H1 (cell line): ENCODE measurements at regions of chr17 and their contacts with region 1.

Region 1: DNA sequence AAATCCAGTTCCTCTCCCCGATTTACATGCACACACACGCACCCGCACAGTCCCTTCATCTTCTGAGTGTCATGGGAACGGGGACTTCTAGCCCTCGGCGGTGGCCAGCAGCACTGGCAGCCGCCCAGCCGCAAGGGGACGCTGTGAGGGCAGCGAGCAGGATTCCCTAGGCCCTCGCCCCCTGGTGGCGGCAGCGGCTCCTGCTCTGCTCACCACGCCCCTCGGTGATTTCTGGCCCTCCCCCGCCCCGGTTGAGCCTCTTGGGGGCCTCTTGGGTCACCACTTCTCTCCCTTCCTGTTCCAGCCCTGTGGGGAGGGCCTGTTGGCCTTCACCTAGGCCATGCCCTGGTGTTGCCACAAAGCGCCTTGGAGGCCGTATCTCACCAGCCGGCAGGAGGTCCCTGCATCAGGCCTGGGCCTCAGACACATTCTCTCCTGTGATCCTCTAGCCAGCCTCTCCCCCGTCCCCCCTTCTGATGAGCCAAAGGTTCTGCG is 75.2 kb upstream of the KSR1 start:
- DNase-seq: peak; percentile 68 to 97
- H3K4me3 ChIP-seq: no peak overlapping the region
- H3K27ac ChIP-seq: no peak overlapping the region
- H3K4me1 ChIP-seq: no peaks in the 10 kb centered on the region
- H3K27me3 ChIP-seq: no peaks in the 10 kb centered on the region
- CTCF ChIP-seq: peak; percentile 100
- EP300 ChIP-seq: peak in 1 of 2 experiments; percentile 46; a peak in 1 of 3 replicates
- POLR2A ChIP-seq: no peak
- RAD21 ChIP-seq: peak; percentile 78 to 82

Region 2: DNA sequence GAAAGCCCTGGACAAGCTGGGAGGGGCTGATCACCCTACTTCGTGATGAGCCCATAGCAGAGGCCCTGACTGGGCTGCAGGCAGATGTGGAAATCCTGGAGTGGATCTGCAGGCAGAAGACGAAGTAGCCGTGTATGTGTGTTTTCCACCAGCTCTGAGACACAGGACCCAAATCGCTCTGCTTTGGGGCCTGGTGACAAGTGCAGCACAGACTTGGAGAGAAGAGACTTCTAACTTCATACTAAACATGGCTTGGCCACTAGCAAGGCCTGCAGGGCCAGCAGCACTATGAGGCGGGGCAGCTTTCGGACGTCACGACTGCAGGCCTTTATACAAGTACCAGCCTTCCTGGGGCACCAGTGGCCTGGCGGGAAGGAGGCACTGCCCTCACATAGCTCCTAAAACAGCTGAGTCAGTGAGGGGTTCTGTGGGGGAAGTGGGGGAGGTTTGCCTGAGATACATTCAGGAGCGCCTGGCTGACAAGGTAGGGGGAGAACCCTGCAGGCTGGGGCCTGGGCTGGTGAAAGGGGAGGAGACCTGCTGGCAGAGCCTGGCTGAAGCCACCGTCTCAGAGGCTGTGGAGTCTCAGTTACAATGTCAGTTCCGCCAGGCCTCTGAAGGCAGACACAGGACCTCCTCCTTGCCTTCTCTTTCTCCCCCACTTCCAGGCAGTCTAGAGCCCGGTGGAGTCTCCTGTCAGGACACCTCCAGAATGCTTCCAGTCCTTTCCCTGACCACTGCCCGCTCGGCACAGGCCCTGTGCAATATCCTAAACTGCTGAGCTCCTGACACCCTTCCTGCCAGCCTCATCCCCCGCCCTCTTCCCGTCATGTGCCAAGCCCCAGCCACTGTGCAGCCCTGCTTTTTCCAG is 13.7 kb before region 1 on chr17:
- CTCF ChIA-PET with region 1: interaction called, 76 read pairs
- POLR2A ChIA-PET with region 1: interaction called, 9 read pairs
- DNase-seq: no peak
- H3K4me3 ChIP-seq: no peak overlapping the region
- H3K27ac ChIP-seq: no peak overlapping the region
- H3K4me1 ChIP-seq: no peaks in the 10 kb centered on the region; a peak in 2 of 7 replicates
- H3K27me3 ChIP-seq: no peaks in the 10 kb centered on the region
- CTCF ChIP-seq: no peak
- EP300 ChIP-seq: no peak
- POLR2A ChIP-seq: no peak
- RAD21 ChIP-seq: no peak

Region 3: GRCh38 chr17:27407916-27408846 is 27.1 kb after region 1 on chr17:
- CTCF ChIA-PET with region 1: interaction called, 18 read pairs
- POLR2A ChIA-PET with region 1: no interaction called
- DNase-seq: no peak
- H3K4me3 ChIP-seq: no peak overlapping the region
- H3K27ac ChIP-seq: no peak overlapping the region
- H3K4me1 ChIP-seq: peaks cover 0 to 4% (median under 1%) of the 10 kb centered on the region in 4 experiments; a peak in 1 of 7 replicates
- H3K27me3 ChIP-seq: 0 out of 7 replicates have a peak, but pooled peaks cover 0 to 4% (median 0%) of the 10 kb centered on the region in 4 experiments
- CTCF ChIP-seq: no peak
- EP300 ChIP-seq: no peak
- POLR2A ChIP-seq: no peak
- RAD21 ChIP-seq: no peak